Astrocyte of the cerebellum (primary cell): ENCODE measurements at regions of chr2 and their contacts with region 1.

Region 1: GRCh38 chr2:3169106-3169870 is 208.3 kb downstream of the EIPR1 start:
- DNase-seq: no peak
- H3K4me3 ChIP-seq: no peak overlapping the region
- CTCF ChIP-seq: no peak

Region 2: GRCh38 chr2:2484296-2484695 is 685.0 kb before region 1 on chr2:
- in situ Hi-C with region 1: no loop called
- DNase-seq: no peak
- H3K4me3 ChIP-seq: no peak overlapping the region
- CTCF ChIP-seq: no peak

Region 3: GRCh38 chr2:3094999-3095958 is 74.0 kb before region 1 on chr2:
- in situ Hi-C with region 1: loop called (anchors 5 kb)
- DNase-seq: no peak
- H3K4me3 ChIP-seq: no peak overlapping the region
- CTCF ChIP-seq: no peak